Dorsolateral prefrontal cortex (tissue), 120 donors: ENCODE measurements at regions of chr3 and their contacts with region 1.

Region 1: DNA sequence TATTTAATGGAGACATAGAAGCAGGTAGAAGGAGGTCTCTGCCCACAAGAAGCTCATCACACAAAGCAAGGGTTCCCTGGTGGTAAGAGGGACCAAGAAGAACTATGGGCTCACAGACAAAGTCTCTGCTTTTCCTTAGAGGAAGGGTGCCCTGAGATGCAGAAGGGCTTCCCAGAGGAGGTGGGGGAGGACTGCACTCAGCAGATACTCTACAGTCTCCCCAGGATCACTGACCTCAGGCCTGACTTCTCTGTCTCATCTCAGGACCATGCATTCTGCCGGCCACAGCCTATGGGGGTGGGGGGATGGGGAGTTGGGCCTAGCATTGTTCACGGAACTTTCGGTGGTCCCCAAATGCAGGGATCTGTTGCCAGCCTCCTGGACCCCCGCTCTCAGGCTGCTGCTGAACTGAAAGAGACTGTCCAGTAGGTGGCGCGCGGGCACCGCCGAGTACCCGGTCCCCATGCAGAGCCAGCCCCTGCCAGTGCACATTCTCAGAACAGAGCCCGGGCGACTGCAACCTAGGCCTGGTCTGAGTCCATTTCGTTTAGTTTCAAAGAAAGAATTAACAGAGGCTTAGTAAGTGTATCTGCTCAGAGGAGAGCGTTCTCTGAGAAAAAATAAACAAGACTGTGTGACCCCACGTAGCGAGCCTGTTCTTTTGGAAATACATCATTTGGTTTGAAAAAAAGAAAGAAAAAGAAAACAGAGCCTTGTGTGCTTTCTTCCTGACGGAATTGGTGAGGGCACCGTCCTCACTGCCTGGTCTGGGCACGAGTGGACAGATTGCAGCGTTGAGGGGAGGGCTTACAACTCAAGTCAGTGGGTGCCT is 74.1 kb downstream of the LRTM1 start:
- DNase-seq: peak; percentile 77 to 90 (median 86)
- H3K4me3 ChIP-seq: peak overlapping the region in 5 of 59 donors; percentile 5 to 29 (median 20)
- H3K27ac ChIP-seq: peak overlapping the region in 22 of 59 donors; percentile 5 to 68 (median 43)
- H3K27me3 ChIP-seq: no peaks in the 10 kb centered on the region
- CTCF ChIP-seq: peak; percentile 60 to 98 (median 93)

Region 2: DNA sequence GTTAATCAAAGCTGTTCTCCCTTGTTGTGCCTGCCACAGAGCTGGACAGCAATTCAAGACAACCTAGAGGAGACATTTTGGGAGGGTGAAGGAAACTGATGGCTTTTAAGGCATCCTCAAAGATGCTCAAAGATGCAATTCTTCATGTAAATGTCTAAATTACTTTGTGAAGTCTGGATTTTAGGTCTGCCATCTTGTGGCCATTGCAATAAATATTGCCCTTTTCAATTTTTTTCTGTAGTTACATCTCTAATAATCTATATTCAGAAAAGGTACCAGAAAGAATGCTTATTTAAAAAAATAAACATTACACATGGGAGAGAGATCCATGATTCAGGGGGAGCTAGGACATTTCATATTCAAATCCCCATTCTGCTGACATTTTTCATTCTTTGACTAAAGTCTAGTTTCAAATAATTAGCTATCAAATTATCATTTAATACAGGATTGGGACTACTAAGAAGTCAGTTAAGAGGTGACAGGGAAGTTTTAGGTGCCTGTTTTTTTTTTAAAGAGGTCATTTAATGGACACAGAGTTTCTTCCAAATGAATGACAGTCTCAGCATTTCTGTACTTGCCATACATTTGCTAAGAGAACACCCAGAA is 893.1 kb after region 1 on chr3:
- intact Hi-C with region 1: loop called in 1 of 2 experiments (anchors 10 kb)
- DNase-seq: no peak
- H3K4me3 ChIP-seq: no peak overlapping the region
- H3K27ac ChIP-seq: no peak overlapping the region
- H3K27me3 ChIP-seq: no peaks in the 10 kb centered on the region
- CTCF ChIP-seq: peak in 55 of 56 donors; percentile 32 to 74 (median 56)

Region 3: DNA sequence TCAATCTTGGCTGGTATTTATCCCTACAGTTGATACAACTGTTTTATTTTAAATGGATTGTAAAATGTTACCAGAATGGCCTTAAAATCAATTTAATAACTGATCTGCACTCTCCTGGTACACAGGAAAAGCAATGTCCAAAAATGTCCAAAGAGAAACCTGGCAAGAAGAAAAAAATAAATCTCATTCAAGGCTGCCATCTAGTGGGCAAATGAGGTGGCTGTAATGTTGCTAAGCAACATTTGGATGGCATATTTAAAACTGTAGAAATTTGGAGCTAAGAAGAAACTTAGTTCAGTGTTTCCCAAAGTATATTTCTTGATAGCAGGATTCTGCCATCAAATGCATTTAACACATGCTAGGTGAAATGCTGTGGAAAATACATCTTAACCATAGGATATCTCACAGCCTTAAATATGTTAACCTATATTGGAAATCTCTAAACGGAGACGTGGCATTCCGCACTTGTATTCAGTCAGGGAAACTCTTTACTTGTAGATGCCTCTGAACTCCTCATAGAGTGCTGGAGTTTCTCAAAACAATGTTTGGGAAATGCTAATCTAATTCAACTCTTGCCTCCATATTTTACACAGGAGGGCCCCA is 1397.7 kb after region 1 on chr3:
- intact Hi-C with region 1: loop called (anchors 10 kb)
- DNase-seq: peak in 2 of 10 donors; percentile 39 to 42
- H3K4me3 ChIP-seq: no peak overlapping the region
- H3K27ac ChIP-seq: no peak overlapping the region
- H3K27me3 ChIP-seq: no peaks in the 10 kb centered on the region
- CTCF ChIP-seq: peak; percentile 65 to 94 (median 85)